Naive thymus-derived CD4-positive, alpha-beta T cell (primary cell): ENCODE measurements at regions of chr20 and their contacts with region 1.

Region 1: DNA sequence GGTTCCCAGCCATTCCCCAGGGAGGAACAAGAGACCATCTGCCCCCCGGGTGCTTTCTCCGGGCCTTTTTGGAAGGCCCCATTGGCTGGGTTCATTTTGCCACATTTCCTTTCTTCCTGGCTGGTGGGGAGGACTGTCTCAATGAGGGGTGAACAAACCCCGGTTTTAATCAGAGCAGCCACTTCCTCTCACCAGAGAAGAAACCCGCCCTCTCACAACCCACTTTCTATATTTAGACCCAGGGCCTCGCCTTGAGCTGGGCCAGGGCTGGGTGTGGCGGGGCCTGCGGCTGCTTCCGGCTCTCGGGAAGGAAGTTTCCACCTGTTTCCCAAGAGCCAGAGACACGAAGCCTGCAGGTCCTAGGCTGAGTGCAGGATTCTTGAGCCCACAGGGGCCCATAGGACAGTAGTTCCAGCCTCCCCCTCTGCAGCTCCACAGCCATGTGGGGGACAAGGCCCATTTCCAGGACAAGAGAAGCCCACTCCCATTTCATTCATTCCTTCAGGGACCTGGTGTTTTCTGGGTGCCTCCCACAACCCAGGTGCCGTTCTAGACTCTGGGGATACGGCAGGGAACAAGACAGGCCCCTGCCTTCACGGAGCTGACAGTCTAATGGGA is 41.8 kb downstream of the RBM38 start:
- DNase-seq: peak in 8 of 9 donors; percentile 63 to 81 (median 76)
- ATAC-seq: peak; percentile 83
- H3K4me3 ChIP-seq: peak overlapping the region; percentile 34
- H3K4me3 Mint-ChIP-seq: peak overlapping the region; percentile 55 to 94 (median 78)
- H3K27ac ChIP-seq: peak overlapping the region; percentile 59
- H3K27ac Mint-ChIP-seq: peak overlapping the region; percentile 60 to 95 (median 90)
- H3K4me1 ChIP-seq: peaks cover 45 to 55% of the 10 kb centered on the region in 2 donors
- H3K4me1 Mint-ChIP-seq: peaks cover 49 to 77% (median 67%) of the 10 kb centered on the region in 7 donors
- H3K27me3 ChIP-seq: no peaks in the 10 kb centered on the region
- H3K27me3 Mint-ChIP-seq: peaks cover 0 to 7% (median 0%) of the 10 kb centered on the region in 5 donors

Region 2: DNA sequence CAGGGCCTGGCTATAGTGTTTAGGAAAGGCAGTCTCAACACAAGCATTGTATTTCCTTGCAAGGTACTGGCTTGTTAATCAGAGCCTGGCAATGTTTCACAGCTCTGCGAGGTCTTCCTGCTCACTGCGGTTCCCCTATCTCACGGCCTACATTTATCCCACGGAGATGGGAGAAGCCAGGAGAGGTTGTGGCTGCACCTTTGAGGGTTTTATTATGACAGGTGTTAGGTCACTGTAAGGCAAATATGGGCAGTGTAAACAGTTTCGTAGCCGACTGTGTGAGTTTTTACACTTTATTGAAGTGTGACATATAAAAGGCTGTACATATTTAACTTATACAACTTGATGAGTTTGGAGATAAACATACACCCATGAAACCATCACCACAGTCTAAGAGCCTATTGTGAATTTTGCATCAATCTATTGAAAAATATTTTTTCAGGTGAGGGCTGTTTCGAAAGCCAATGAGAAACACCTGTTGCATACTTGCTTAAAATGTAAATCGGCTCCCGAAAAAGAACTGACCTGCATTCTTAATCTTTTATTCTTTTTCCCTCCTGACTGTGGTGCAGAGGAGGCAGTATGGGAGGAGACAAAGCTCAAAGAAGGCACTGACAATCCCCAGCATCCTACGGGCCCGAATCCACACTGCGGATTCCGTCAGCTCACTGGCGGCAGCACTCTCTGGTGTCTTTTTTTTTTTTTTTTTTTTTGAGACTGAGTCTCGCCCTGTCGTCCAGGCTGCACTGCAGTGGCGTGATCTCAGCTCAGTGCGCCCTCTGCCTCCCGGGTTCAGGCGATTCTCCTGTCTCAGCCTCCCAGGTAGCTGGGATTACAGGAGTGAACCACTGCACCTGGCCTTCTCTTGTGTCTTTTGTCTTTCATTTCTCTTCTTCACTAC is 49.3 kb before region 1 on chr20:
- CTCF ChIA-PET with region 1: interaction called, 14 read pairs
- POLR2A ChIA-PET with region 1: interaction called, 109 read pairs
- intact Hi-C with region 1: loop called in 1 of 2 experiments (anchors 1 kb)
- DNase-seq: no peak
- ATAC-seq: no peak
- H3K4me3 ChIP-seq: no peak overlapping the region
- H3K4me3 Mint-ChIP-seq: no peak overlapping the region
- H3K27ac ChIP-seq: no peak overlapping the region
- H3K27ac Mint-ChIP-seq: peak overlapping the region in 3 of 9 donors; percentile 45 to 77 (median 71)
- H3K4me1 ChIP-seq: peaks cover 6 to 12% of the 10 kb centered on the region in 2 donors
- H3K4me1 Mint-ChIP-seq: peaks cover 7 to 32% (median 20%) of the 10 kb centered on the region in 7 donors
- H3K27me3 ChIP-seq: no peaks in the 10 kb centered on the region
- H3K27me3 Mint-ChIP-seq: no peaks in the 10 kb centered on the region

Region 3: DNA sequence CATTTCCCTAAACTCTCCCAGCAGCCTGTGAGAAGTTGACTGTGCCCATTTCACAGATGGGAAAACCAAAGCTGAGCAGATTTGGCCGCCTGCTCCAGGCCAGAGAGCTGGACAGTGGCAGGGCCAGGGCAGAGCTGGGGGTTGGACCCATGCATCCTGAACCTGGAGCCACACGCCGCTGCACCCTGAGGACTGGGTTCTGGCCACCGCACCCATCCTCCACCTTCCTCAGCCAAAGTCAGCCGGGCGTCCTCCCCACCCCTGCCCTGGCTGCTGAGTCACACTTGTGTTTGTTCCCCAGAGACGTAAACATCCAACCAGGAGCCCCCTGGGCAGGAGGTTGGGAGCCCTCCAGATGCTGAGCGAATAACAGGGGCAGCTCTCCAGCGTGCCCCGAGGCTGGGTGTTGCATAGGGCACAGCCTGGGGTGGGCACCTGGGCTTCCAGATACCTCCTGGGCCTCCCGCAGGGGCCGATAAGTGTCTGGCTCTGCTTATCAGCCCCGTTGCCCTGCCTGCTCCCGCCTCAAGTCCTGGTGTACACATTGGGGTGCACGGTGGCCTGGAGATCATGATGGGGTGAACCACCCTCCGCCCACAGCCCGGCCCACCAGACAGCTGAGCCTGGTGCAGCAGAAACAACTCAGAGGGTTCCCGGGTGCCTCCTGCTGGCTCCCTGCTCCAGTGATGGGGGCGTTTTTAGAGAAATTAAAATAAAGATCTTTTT is 18.0 kb before region 1 on chr20:
- CTCF ChIA-PET with region 1: interaction called, 7 read pairs
- POLR2A ChIA-PET with region 1: interaction called, 10 read pairs
- intact Hi-C with region 1: loop called in 1 of 2 experiments (anchors 2 kb)
- DNase-seq: no peak
- ATAC-seq: peak; percentile 38
- H3K4me3 ChIP-seq: no peak overlapping the region
- H3K4me3 Mint-ChIP-seq: no peak overlapping the region
- H3K27ac ChIP-seq: no peak overlapping the region
- H3K27ac Mint-ChIP-seq: peak overlapping the region in 1 of 9 donors; percentile 60
- H3K4me1 ChIP-seq: peaks cover 0 to 3% of the 10 kb centered on the region in 2 donors
- H3K4me1 Mint-ChIP-seq: peaks cover 13 to 33% (median 25%) of the 10 kb centered on the region in 7 donors
- H3K27me3 ChIP-seq: no peaks in the 10 kb centered on the region
- H3K27me3 Mint-ChIP-seq: peaks cover 0 to 9% (median 0%) of the 10 kb centered on the region in 5 donors

Region 4: GRCh38 chr20:57450419-57450818 is 17.4 kb after region 1 on chr20:
- CTCF ChIA-PET with region 1: no interaction called
- POLR2A ChIA-PET with region 1: interaction called, 10 read pairs
- intact Hi-C with region 1: loop called in 1 of 2 experiments (anchors 2 kb)
- DNase-seq: peak in 4 of 9 donors; percentile 15 to 28 (median 18)
- ATAC-seq: peak; percentile 87
- H3K4me3 ChIP-seq: peak overlapping the region; percentile 19
- H3K4me3 Mint-ChIP-seq: peak overlapping the region; percentile 41 to 79 (median 70)
- H3K27ac ChIP-seq: no peak overlapping the region
- H3K27ac Mint-ChIP-seq: peak overlapping the region; percentile 34 to 89 (median 73)
- H3K4me1 ChIP-seq: peaks cover 16 to 37% of the 10 kb centered on the region in 2 donors
- H3K4me1 Mint-ChIP-seq: peaks cover 26 to 52% (median 46%) of the 10 kb centered on the region in 7 donors
- H3K27me3 ChIP-seq: no peaks in the 10 kb centered on the region
- H3K27me3 Mint-ChIP-seq: peaks cover 0 to 29% (median 0%) of the 10 kb centered on the region in 5 donors

Region 5: DNA sequence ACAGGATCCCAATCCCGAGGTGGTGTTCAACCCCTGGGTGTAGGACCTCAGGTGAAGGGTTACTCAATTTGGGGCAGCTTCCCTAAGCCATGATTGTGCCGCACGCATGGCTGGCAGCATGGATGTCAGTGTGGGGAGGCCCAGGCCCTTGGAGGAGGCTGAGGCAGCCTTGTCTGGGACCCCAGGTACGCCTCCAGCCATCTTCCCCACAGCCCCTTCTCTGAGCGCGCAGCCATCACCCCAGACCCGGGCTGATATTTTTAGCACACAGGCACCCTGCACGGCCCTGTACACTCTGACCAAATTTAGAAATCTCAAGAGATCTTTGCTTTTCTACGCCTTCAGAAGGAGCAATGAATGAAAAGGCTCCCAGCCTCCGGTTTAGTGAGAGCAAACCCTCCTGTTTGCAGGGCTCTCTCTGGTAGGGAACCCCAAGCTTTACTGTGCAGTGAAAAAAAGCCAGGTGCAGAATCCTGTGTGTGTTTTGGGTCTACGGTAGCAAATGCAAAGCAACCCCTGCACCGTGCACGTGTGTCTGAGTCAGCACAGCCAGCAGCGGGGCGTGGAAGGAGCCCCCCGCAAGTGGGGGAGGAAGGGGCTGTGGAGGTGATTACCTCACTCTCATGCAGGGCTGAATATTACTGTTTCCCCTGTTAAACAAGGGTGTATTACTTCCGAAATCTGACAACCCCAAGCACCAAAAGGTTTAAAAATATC is 47.6 kb after region 1 on chr20:
- CTCF ChIA-PET with region 1: no interaction called
- POLR2A ChIA-PET with region 1: interaction called, 3 read pairs
- intact Hi-C with region 1: loop called in 1 of 2 experiments (anchors 2 kb)
- DNase-seq: peak in 6 of 9 donors; percentile 16 to 53 (median 36)
- ATAC-seq: peak; percentile 74
- H3K4me3 ChIP-seq: no peak overlapping the region
- H3K4me3 Mint-ChIP-seq: peak overlapping the region in 9 of 10 donors; percentile 49 to 81 (median 74)
- H3K27ac ChIP-seq: peak overlapping the region; percentile 47
- H3K27ac Mint-ChIP-seq: peak overlapping the region in 8 of 9 donors; percentile 48 to 87 (median 85)
- H3K4me1 ChIP-seq: peaks cover 7 to 26% of the 10 kb centered on the region in 2 donors
- H3K4me1 Mint-ChIP-seq: peaks cover 5 to 54% (median 31%) of the 10 kb centered on the region in 7 donors
- H3K27me3 ChIP-seq: no peaks in the 10 kb centered on the region
- H3K27me3 Mint-ChIP-seq: peaks cover 0 to 25% (median 0%) of the 10 kb centered on the region in 5 donors

Region 6: GRCh38 chr20:57498425-57499400 is 65.7 kb after region 1 on chr20:
- CTCF ChIA-PET with region 1: interaction called, 7 read pairs
- POLR2A ChIA-PET with region 1: no interaction called
- intact Hi-C with region 1: loop called (anchors 1 to 10 kb)
- DNase-seq: peak in 5 of 9 donors; percentile 19 to 43 (median 24)
- ATAC-seq: peak; percentile 78
- H3K4me3 ChIP-seq: no peak overlapping the region
- H3K4me3 Mint-ChIP-seq: peak overlapping the region in 5 of 10 donors; percentile 3 to 33 (median 20)
- H3K27ac ChIP-seq: no peak overlapping the region
- H3K27ac Mint-ChIP-seq: peak overlapping the region in 2 of 9 donors; percentile 55 to 60
- H3K4me1 ChIP-seq: peaks cover 6 to 11% of the 10 kb centered on the region in 2 donors
- H3K4me1 Mint-ChIP-seq: peaks cover 12 to 15% (median 13%) of the 10 kb centered on the region in 7 donors
- H3K27me3 ChIP-seq: peaks cover 0 to 5% of the 10 kb centered on the region in 2 donors
- H3K27me3 Mint-ChIP-seq: peaks cover 11 to 72% (median 30%) of the 10 kb centered on the region in 5 donors